ENCODE measurements at regions of chr3 and their contacts with region 1.

Region 1: DNA sequence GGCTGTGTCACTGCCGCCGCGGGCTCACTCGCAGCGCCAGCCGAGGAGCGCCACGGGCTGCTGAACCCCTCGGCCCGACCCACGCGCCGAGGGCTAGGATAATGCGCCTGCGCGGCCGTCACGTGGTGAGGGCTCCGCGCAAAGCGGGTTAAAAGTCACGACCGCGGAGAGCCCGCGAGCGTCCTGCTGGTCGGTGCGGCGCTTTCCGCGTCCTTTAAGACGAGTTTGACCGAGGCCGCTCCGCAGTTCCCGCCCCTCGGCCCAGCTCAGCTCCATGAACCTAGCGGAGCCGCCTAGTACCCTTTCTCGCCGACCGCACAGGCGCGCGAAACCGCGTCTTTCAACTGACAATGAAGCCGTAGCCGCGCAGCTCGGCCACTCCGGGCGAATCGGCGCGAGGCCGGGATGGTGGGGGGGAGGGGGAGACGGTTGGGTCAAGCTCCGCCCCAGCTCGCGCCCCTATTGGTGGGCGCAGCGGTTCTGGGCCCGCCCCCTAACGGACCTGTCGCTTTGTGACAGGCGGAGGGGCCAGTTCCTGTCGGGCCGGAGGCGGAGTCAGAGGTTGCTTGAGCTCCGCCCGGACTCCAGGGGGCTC is 636 bp upstream of the STT3B start:
- DNase-seq: peak; percentile 97 to 99 (median 98)
- ATAC-seq: peak; percentile 85
- H3K4me3 ChIP-seq: peak overlapping the region; percentile 70 to 94
- H3K4me3 Mint-ChIP-seq: peak overlapping the region; percentile 99
- H3K27ac ChIP-seq: peak overlapping the region; percentile 86 to 99
- H3K27ac Mint-ChIP-seq: peak overlapping the region; percentile 97
- H3K4me1 ChIP-seq: peaks cover 21% of the 10 kb centered on the region
- H3K4me1 Mint-ChIP-seq: peaks cover 30% of the 10 kb centered on the region
- H3K27me3 ChIP-seq: peaks cover 0 to 3% of the 10 kb centered on the region in 2 experiments
- H3K27me3 Mint-ChIP-seq: no peaks in the 10 kb centered on the region
- CTCF ChIP-seq: no peak

Region 2: DNA sequence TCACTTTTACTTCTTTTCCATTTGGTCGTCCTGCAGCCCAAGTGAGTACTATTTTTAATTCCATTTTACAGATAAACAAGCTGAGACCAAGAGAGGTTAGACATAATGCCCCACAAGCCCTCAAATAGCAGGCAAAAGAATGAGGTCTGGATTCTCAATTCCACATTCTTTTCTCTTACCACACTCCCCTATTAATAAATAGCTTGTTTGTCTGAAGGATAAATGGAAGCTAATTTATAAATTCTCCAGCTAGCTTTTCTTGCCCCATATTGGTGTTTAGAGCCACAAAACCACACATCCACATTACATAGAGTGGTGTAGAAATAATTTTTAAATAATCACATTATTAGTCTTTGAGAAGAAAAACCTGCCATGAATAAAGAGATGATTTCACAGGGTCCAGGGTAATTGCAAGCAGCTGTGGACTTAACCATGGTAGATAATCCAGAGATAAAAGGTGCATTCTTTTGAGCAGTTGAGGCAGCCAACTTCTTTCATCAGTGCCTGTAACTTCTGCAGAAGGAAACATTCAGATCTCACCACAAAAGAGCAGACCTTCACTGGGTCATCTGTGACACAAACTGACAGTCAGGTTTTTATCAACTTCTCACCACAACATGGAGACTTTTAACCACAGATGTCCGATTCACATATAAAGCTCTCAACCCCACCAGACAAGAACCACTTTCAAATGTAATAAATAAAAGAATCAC is 312.8 kb before region 1 on chr3:
- CTCF ChIA-PET with region 1: no interaction called
- POLR2A ChIA-PET with region 1: interaction called, 8 read pairs
- intact Hi-C with region 1: loop called in 1 of 2 experiments (anchors 10 kb)
- DNase-seq: no peak
- ATAC-seq: no peak
- H3K4me3 ChIP-seq: no peak overlapping the region
- H3K4me3 Mint-ChIP-seq: no peak overlapping the region
- H3K27ac ChIP-seq: no peak overlapping the region
- H3K27ac Mint-ChIP-seq: no peak overlapping the region
- H3K4me1 ChIP-seq: peaks cover 57% of the 10 kb centered on the region
- H3K4me1 Mint-ChIP-seq: peaks cover 91% of the 10 kb centered on the region
- H3K27me3 ChIP-seq: no peaks in the 10 kb centered on the region
- H3K27me3 Mint-ChIP-seq: no peaks in the 10 kb centered on the region
- CTCF ChIP-seq: no peak

Region 3: GRCh38 chr3:31462050-31462569 is 70.0 kb before region 1 on chr3:
- CTCF ChIA-PET with region 1: interaction called, 12 read pairs
- POLR2A ChIA-PET with region 1: interaction called, 87 read pairs
- intact Hi-C with region 1: loop called (anchors 1 to 2 kb)
- DNase-seq: peak in 8 of 9 experiments; percentile 11 to 92 (median 58)
- ATAC-seq: peak; percentile 83
- H3K4me3 ChIP-seq: peak overlapping the region; percentile 16 to 33
- H3K4me3 Mint-ChIP-seq: peak overlapping the region; percentile 73
- H3K27ac ChIP-seq: peak overlapping the region; percentile 40 to 71
- H3K27ac Mint-ChIP-seq: peak overlapping the region; percentile 97
- H3K4me1 ChIP-seq: peaks cover 53% of the 10 kb centered on the region
- H3K4me1 Mint-ChIP-seq: peaks cover 66% of the 10 kb centered on the region
- H3K27me3 ChIP-seq: no peaks in the 10 kb centered on the region
- H3K27me3 Mint-ChIP-seq: no peaks in the 10 kb centered on the region
- CTCF ChIP-seq: no peak

Region 4: GRCh38 chr3:31567036-31567435 is 34.9 kb after region 1 on chr3:
- CTCF ChIA-PET with region 1: interaction called, 11 read pairs
- POLR2A ChIA-PET with region 1: interaction called, 5 read pairs
- intact Hi-C with region 1: loop called in 1 of 2 experiments (anchors 5 kb)
- DNase-seq: peak in 5 of 9 experiments; percentile 34 to 70 (median 48)
- ATAC-seq: peak; percentile 82
- H3K4me3 ChIP-seq: no peak overlapping the region
- H3K4me3 Mint-ChIP-seq: peak overlapping the region; percentile 27
- H3K27ac ChIP-seq: no peak overlapping the region
- H3K27ac Mint-ChIP-seq: no peak overlapping the region
- H3K4me1 ChIP-seq: peaks cover 74% of the 10 kb centered on the region
- H3K4me1 Mint-ChIP-seq: peaks cover 86% of the 10 kb centered on the region
- H3K27me3 ChIP-seq: no peaks in the 10 kb centered on the region
- H3K27me3 Mint-ChIP-seq: no peaks in the 10 kb centered on the region
- CTCF ChIP-seq: peak; percentile 75

Region 5: GRCh38 chr3:32117324-32117723 is 585.2 kb after region 1 on chr3:
- CTCF ChIA-PET with region 1: no interaction called
- POLR2A ChIA-PET with region 1: interaction called, 5 read pairs
- intact Hi-C with region 1: loop called in 1 of 2 experiments (anchors 1 kb)
- DNase-seq: no peak
- ATAC-seq: no peak
- H3K4me3 ChIP-seq: no peak overlapping the region
- H3K4me3 Mint-ChIP-seq: no peak overlapping the region
- H3K27ac ChIP-seq: no peak overlapping the region
- H3K27ac Mint-ChIP-seq: no peak overlapping the region
- H3K4me1 ChIP-seq: peaks cover 39% of the 10 kb centered on the region
- H3K4me1 Mint-ChIP-seq: peaks cover 74% of the 10 kb centered on the region
- H3K27me3 ChIP-seq: no peaks in the 10 kb centered on the region
- H3K27me3 Mint-ChIP-seq: no peaks in the 10 kb centered on the region
- CTCF ChIP-seq: no peak

Region 6: DNA sequence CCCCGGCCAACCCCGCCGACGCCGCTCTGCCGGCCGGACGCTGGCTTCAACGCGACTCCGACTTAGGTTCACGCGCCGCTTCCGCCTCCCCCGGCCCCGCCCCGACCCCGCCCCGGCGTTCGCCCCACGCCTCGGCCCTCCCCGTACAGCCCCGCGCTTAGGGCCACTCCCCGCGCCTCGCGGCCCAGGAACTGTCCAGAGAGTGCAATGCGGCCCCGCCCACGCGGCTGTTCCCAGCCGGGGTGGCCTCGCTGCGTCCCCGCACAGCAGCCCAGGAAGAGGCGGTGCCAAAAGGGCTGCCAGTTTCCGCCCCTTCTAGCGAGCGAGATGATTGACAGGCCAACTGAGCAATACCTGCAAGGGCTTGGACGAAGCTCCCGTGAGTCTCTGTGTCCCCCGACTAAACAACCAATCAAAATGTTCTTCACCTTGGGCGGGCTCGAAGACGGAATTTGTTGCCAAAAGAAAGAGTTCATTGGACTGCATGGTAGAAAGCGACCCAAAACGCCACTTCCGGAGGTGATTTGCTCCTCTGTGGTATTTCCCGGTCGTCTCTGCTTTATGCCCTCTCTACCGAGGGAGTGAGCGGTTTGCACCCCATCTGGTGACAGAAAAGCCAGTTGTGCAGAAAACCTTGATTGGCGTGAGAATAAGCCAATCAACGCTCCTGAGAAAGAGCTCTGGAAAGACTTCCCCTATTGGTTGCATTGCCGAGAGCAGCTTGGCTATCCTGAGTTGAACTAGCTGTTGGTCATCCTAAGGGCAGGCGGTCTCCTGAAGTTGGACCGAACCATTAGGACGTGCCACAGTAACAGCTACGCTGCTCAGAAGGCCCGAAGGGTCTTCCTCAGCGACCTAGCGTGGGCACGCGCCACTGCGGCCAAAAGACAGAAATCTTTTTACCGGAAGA is 1908.5 kb after region 1 on chr3 and contains the start of gene UBP1:
- CTCF ChIA-PET with region 1: no interaction called
- POLR2A ChIA-PET with region 1: no interaction called
- intact Hi-C with region 1: loop called in 1 of 2 experiments (anchors 10 kb)
- DNase-seq: peak; percentile 90 to 100 (median 95)
- ATAC-seq: peak; percentile 81
- H3K4me3 ChIP-seq: peak within 1 kb of the TSS; percentile 79 to 81
- H3K4me3 Mint-ChIP-seq: peak within 1 kb of the TSS; percentile 100
- H3K27ac ChIP-seq: peak within 1 kb of the TSS; percentile 94 to 96
- H3K27ac Mint-ChIP-seq: peak within 1 kb of the TSS; percentile 100
- H3K4me1 ChIP-seq: peaks cover 33% of the 10 kb centered on the region
- H3K4me1 Mint-ChIP-seq: peaks cover 48% of the 10 kb centered on the region
- H3K27me3 ChIP-seq: no peaks in the 10 kb centered on the region
- H3K27me3 Mint-ChIP-seq: no peaks in the 10 kb centered on the region
- CTCF ChIP-seq: no peak
- total RNA-seq, gene UBP1: 54.4 to 55.9 TPM